ENCODE measurements at regions of chr10 and their contacts with region 1.

Region 1: GRCh38 chr10:104121520-104122224 is at the start of gene SFR1:
- DNase-seq: peak; percentile 95 to 100 (median 99)
- ATAC-seq: peak; percentile 93
- H3K4me3 ChIP-seq: peak within 1 kb of the TSS; percentile 88
- H3K4me3 Mint-ChIP-seq: peak within 1 kb of the TSS; percentile 88 to 97 (median 96)
- H3K27ac ChIP-seq: peak within 1 kb of the TSS; percentile 99
- H3K27ac Mint-ChIP-seq: peak within 1 kb of the TSS; percentile 95 to 100 (median 99)
- H3K4me1 ChIP-seq: peaks cover 13 to 18% of the 10 kb centered on the region in 2 donors
- H3K4me1 Mint-ChIP-seq: peaks cover 9 to 42% (median 32%) of the 10 kb centered on the region in 7 donors
- H3K27me3 ChIP-seq: no peaks in the 10 kb centered on the region
- H3K27me3 Mint-ChIP-seq: peaks cover 0 to 12% (median 0%) of the 10 kb centered on the region in 5 donors
- total RNA-seq, gene SFR1: 12.0 to 15.3 (median 14.2) TPM

Region 2: DNA sequence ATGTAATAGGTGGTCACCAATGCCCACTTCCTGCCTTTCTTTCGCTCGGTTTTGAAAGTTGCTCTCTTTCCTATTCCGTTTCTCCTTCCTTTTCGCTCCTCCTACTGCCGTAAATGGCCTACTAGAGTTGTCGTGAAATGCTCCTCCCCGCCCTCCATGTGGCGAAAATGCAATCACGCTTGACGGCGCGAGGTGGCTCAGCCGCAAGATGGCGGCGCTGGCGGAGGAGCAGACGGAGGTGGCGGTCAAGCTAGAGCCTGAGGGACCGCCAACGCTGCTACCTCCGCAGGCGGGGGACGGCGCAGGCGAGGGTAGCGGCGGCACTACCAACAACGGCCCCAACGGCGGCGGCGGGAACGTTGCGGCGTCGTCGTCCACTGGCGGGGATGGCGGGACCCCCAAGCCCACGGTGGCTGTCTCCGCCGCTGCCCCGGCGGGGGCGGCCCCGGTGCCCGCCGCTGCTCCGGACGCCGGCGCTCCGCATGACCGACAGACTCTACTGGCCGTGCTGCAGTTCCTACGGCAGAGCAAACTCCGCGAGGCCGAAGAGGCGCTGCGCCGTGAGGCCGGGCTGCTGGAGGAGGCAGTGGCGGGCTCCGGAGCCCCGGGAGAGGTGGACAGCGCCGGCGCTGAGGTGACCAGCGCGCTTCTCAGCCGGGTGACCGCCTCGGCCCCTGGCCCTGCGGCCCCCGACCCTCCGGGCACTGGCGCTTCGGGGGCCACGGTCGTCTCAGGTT is 753.7 kb before region 1 on chr10 and contains the start of gene TAF5:
- CTCF ChIA-PET with region 1: no interaction called
- POLR2A ChIA-PET with region 1: no interaction called
- intact Hi-C with region 1: loop called in 1 of 2 experiments (anchors 5 kb)
- DNase-seq: peak; percentile 70 to 94 (median 90)
- ATAC-seq: peak; percentile 88
- H3K4me3 ChIP-seq: peak within 1 kb of the TSS; percentile 58
- H3K4me3 Mint-ChIP-seq: peak within 1 kb of the TSS; percentile 92 to 99 (median 96)
- H3K27ac ChIP-seq: peak within 1 kb of the TSS; percentile 77
- H3K27ac Mint-ChIP-seq: peak within 1 kb of the TSS; percentile 84 to 98 (median 94)
- H3K4me1 ChIP-seq: peaks cover 4 to 11% of the 10 kb centered on the region in 2 donors
- H3K4me1 Mint-ChIP-seq: peaks cover 0 to 35% (median 23%) of the 10 kb centered on the region in 7 donors
- H3K27me3 ChIP-seq: no peaks in the 10 kb centered on the region
- H3K27me3 Mint-ChIP-seq: no peaks in the 10 kb centered on the region
- total RNA-seq, gene TAF5: 4.7 to 8.9 (median 7.1) TPM

Region 3: DNA sequence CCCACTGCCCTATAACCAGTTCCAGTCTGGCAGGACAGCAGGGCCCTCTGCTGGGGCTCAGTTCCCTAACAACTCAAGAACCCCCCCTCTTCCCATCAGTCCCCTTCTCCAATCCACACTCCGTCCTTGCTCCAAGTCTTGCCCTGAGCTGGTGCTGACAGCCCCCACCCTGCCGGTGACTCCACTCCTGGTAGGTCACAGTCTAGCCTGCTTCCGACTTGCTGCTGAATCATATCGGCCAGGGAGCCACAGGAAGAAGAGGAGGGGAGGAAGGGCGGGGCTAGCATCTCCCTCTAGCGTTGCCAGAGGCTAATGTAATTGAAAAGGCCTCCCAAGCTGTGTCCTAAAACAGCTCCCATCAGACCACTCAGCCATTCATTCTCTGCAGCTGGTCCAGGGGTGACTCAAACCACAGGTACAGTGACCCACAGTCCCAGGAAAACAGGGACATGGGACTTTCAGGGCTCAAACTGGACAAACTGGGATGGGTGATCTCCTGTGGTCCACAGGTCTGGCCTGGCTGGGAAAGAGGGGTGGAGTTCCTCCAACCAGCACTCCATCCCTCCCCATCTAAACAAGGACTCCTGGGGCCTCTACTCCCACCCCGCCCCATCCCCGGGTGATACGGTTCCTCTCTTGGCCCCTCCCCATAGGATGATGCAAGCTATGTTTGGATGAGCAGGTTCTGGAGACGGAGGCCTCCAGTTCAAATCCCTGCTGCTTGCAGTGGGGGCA is 425.1 kb before region 1 on chr10:
- CTCF ChIA-PET with region 1: no interaction called
- POLR2A ChIA-PET with region 1: interaction called, 3 read pairs
- intact Hi-C with region 1: loop called in 1 of 2 experiments (anchors 5 kb)
- DNase-seq: peak in 7 of 9 donors; percentile 29 to 74 (median 35)
- ATAC-seq: peak; percentile 74
- H3K4me3 ChIP-seq: no peak overlapping the region
- H3K4me3 Mint-ChIP-seq: peak overlapping the region in 8 of 10 donors; percentile 7 to 83 (median 50)
- H3K27ac ChIP-seq: no peak overlapping the region
- H3K27ac Mint-ChIP-seq: peak overlapping the region in 6 of 9 donors; percentile 3 to 88 (median 64)
- H3K4me1 ChIP-seq: peaks cover 16 to 27% of the 10 kb centered on the region in 2 donors
- H3K4me1 Mint-ChIP-seq: peaks cover 15 to 43% (median 23%) of the 10 kb centered on the region in 7 donors
- H3K27me3 ChIP-seq: no peaks in the 10 kb centered on the region
- H3K27me3 Mint-ChIP-seq: peaks cover 0 to 6% (median 0%) of the 10 kb centered on the region in 5 donors

Region 4: GRCh38 chr10:103901299-103901698 is 220.4 kb before region 1 on chr10:
- CTCF ChIA-PET with region 1: interaction called, 4 read pairs
- POLR2A ChIA-PET with region 1: interaction called, 23 read pairs
- intact Hi-C with region 1: no loop called
- DNase-seq: peak in 1 of 9 donors; percentile 20
- ATAC-seq: peak; percentile 65
- H3K4me3 ChIP-seq: no peak overlapping the region
- H3K4me3 Mint-ChIP-seq: peak overlapping the region; percentile 25 to 76 (median 60)
- H3K27ac ChIP-seq: peak overlapping the region; percentile 14
- H3K27ac Mint-ChIP-seq: peak overlapping the region in 8 of 9 donors; percentile 38 to 80 (median 65)
- H3K4me1 ChIP-seq: peaks cover 14 to 38% of the 10 kb centered on the region in 2 donors
- H3K4me1 Mint-ChIP-seq: peaks cover 12 to 58% (median 51%) of the 10 kb centered on the region in 7 donors
- H3K27me3 ChIP-seq: no peaks in the 10 kb centered on the region
- H3K27me3 Mint-ChIP-seq: no peaks in the 10 kb centered on the region

Region 5: GRCh38 chr10:103966671-103967447 is 154.8 kb before region 1 on chr10 and contains the start of gene SLK:
- CTCF ChIA-PET with region 1: interaction called, 7 read pairs
- POLR2A ChIA-PET with region 1: interaction called, 16 read pairs
- intact Hi-C with region 1: loop called (anchors 1 kb)
- DNase-seq: peak; percentile 74 to 93 (median 87)
- ATAC-seq: peak; percentile 96
- H3K4me3 ChIP-seq: peak within 1 kb of the TSS; percentile 81
- H3K4me3 Mint-ChIP-seq: peak within 1 kb of the TSS; percentile 93 to 100 (median 98)
- H3K27ac ChIP-seq: peak within 1 kb of the TSS; percentile 78
- H3K27ac Mint-ChIP-seq: peak within 1 kb of the TSS; percentile 91 to 96 (median 94)
- H3K4me1 ChIP-seq: peaks cover 3 to 11% of the 10 kb centered on the region in 2 donors
- H3K4me1 Mint-ChIP-seq: peaks cover 17 to 56% (median 44%) of the 10 kb centered on the region in 7 donors
- H3K27me3 ChIP-seq: no peaks in the 10 kb centered on the region
- H3K27me3 Mint-ChIP-seq: no peaks in the 10 kb centered on the region
- total RNA-seq, gene SLK: 21.4 to 32.2 (median 26.2) TPM

Region 6: GRCh38 chr10:104072786-104073185 is 48.9 kb before region 1 on chr10:
- CTCF ChIA-PET with region 1: no interaction called
- POLR2A ChIA-PET with region 1: no interaction called
- intact Hi-C with region 1: no loop called
- DNase-seq: no peak
- ATAC-seq: no peak
- H3K4me3 ChIP-seq: no peak overlapping the region
- H3K4me3 Mint-ChIP-seq: no peak overlapping the region
- H3K27ac ChIP-seq: no peak overlapping the region
- H3K27ac Mint-ChIP-seq: no peak overlapping the region
- H3K4me1 ChIP-seq: no peaks in the 10 kb centered on the region
- H3K4me1 Mint-ChIP-seq: peaks cover 0 to 2% (median 0%) of the 10 kb centered on the region in 7 donors
- H3K27me3 ChIP-seq: no peaks in the 10 kb centered on the region
- H3K27me3 Mint-ChIP-seq: peaks cover 0 to 12% (median 0%) of the 10 kb centered on the region in 5 donors

Region 7: DNA sequence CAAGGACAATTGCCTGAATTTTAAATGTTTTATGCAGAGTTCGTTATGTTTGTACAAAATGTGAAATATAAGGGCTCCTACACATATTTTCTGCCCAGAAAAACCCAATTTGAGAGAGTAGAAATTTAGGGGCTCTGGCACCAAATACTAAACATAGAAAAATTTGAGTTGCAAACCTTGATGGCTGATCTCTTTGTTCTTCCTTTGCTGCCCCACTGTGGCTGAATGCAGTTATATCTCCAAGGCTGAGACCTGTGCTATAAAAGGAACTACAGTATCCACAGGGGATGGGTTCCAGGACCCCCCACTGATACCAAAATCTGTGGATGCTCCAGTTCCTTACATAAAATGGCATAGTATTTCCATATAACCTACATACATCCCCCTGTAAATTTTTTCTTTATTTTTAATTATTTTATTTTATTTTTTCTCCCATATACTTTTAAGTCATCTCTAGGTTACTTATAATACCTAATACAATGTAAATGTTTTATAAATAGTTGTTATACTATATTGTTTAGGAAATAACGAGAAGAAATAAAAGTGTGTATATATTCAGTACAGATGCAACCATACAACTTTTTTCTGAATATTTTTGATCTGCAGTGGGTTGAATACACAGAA is 88.0 kb after region 1 on chr10:
- CTCF ChIA-PET with region 1: no interaction called
- POLR2A ChIA-PET with region 1: no interaction called
- intact Hi-C with region 1: loop called in 1 of 2 experiments (anchors 1 kb)
- DNase-seq: peak in 7 of 9 donors; percentile 20 to 52 (median 47)
- ATAC-seq: peak; percentile 70
- H3K4me3 ChIP-seq: no peak overlapping the region
- H3K4me3 Mint-ChIP-seq: no peak overlapping the region
- H3K27ac ChIP-seq: no peak overlapping the region
- H3K27ac Mint-ChIP-seq: no peak overlapping the region
- H3K4me1 ChIP-seq: no peaks in the 10 kb centered on the region
- H3K4me1 Mint-ChIP-seq: peaks cover 0 to 3% (median 0%) of the 10 kb centered on the region in 7 donors
- H3K27me3 ChIP-seq: no peaks in the 10 kb centered on the region
- H3K27me3 Mint-ChIP-seq: peaks cover 0 to 50% (median 12%) of the 10 kb centered on the region in 5 donors

Region 8: DNA sequence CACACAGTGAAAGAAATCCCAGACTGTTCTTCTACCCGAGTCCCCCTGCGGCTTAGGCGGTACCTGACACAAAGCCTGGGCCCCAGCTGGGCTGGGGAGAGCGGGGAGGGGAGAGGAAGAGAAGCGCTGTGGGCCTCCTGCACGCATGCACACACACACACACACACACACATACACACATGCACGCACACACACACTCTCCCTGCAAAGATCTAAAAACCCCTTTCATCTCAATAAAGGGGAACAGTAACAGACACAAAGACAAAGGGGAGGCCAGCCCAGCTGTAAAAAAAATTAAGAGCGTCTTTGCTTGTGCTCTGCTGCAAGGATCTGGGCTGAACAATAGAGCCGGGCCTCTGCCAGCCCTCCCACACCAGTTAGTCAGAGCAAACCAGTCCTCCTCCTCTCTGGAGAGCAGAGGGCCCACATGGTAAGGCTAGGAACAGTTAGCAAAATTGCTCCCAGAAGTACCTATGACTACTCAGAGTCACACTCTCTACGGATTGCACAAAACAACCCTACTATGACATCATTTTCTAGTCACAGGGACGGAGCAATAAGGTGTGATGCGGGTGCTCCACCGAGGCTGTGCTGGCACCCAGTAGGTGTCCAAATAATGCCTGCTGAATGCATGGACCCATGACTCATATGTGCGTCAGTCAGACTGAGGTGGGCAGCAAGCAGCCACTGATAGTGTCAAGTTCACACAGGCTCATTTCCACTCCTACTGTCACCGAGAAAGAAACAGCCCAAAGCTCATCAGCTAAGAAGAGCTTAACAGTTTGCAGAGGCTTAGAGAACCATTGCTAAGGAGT is 207.4 kb after region 1 on chr10:
- CTCF ChIA-PET with region 1: no interaction called
- POLR2A ChIA-PET with region 1: interaction called, 3 read pairs
- intact Hi-C with region 1: loop called in 1 of 2 experiments (anchors 5 kb)
- DNase-seq: peak in 8 of 9 donors; percentile 71 to 95 (median 80)
- ATAC-seq: peak; percentile 64
- H3K4me3 ChIP-seq: peak overlapping the region; percentile 51
- H3K4me3 Mint-ChIP-seq: peak overlapping the region; percentile 76 to 93 (median 86)
- H3K27ac ChIP-seq: peak overlapping the region; percentile 78
- H3K27ac Mint-ChIP-seq: peak overlapping the region; percentile 87 to 97 (median 94)
- H3K4me1 ChIP-seq: peaks cover 64 to 97% of the 10 kb centered on the region in 2 donors
- H3K4me1 Mint-ChIP-seq: peaks cover 80 to 100% (median 99%) of the 10 kb centered on the region in 7 donors
- H3K27me3 ChIP-seq: no peaks in the 10 kb centered on the region
- H3K27me3 Mint-ChIP-seq: no peaks in the 10 kb centered on the region

Region 9: GRCh38 chr10:104501864-104502579 is 380.4 kb after region 1 on chr10:
- CTCF ChIA-PET with region 1: no interaction called
- POLR2A ChIA-PET with region 1: no interaction called
- intact Hi-C with region 1: no loop called
- DNase-seq: no peak
- ATAC-seq: no peak
- H3K4me3 ChIP-seq: no peak overlapping the region
- H3K4me3 Mint-ChIP-seq: no peak overlapping the region
- H3K27ac ChIP-seq: no peak overlapping the region
- H3K27ac Mint-ChIP-seq: no peak overlapping the region
- H3K4me1 ChIP-seq: no peaks in the 10 kb centered on the region
- H3K4me1 Mint-ChIP-seq: peaks cover 0 to 2% (median 0%) of the 10 kb centered on the region in 7 donors
- H3K27me3 ChIP-seq: no peaks in the 10 kb centered on the region
- H3K27me3 Mint-ChIP-seq: peaks cover 0 to 20% (median 5%) of the 10 kb centered on the region in 5 donors

Region 10: GRCh38 chr10:104580774-104581675 is 459.4 kb after region 1 on chr10:
- CTCF ChIA-PET with region 1: no interaction called
- POLR2A ChIA-PET with region 1: no interaction called
- intact Hi-C with region 1: no loop called
- DNase-seq: peak; percentile 37 to 76 (median 66)
- ATAC-seq: peak; percentile 83
- H3K4me3 ChIP-seq: no peak overlapping the region
- H3K4me3 Mint-ChIP-seq: peak overlapping the region in 4 of 10 donors; percentile 7 to 38 (median 16)
- H3K27ac ChIP-seq: no peak overlapping the region
- H3K27ac Mint-ChIP-seq: peak overlapping the region in 1 of 9 donors; percentile 0
- H3K4me1 ChIP-seq: no peaks in the 10 kb centered on the region
- H3K4me1 Mint-ChIP-seq: peaks cover 0 to 21% (median 13%) of the 10 kb centered on the region in 7 donors
- H3K27me3 ChIP-seq: no peaks in the 10 kb centered on the region
- H3K27me3 Mint-ChIP-seq: peaks cover 3 to 31% (median 10%) of the 10 kb centered on the region in 5 donors